Activated B cell treated with CpG ODN at 0.5 μM for 24 hours (primary cell): ENCODE measurements at regions of chr16 and their contacts with region 1.

Region 1: DNA sequence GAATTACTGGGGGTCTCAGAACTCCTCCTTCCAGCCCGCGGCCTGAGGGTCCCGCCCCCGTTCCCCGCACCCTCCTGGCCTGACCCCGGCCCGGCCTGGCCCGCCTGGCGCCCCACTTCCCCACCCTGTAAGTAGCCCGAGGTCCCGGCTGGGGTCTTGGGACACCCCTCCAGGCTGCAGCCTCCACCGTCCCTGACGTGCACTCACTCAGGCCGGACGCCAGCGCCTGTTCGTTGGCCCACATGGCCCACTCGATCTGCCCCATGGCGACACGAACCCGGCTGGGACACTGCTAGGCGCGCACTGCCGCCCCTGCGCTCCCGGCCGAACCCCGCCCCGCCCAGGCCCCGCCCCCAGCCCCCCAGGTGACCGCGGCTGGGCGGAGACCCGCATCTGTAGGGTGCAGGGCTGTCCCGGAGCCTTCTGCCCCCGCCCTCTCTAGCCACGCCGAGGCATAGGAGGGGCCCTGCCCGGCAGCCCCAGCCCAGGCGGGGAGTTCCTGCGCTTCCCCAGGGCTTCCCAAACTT is at the start of gene CYBA:
- DNase-seq: no peak
- ATAC-seq: peak; percentile 81
- H3K4me3 Mint-ChIP-seq: peak within 1 kb of the TSS; percentile 93
- H3K27ac Mint-ChIP-seq: peak within 1 kb of the TSS; percentile 93
- H3K4me1 Mint-ChIP-seq: peaks cover 50% of the 10 kb centered on the region
- H3K27me3 Mint-ChIP-seq: no peaks in the 10 kb centered on the region
- CTCF ChIP-seq: no peak
- total RNA-seq, gene CYBA: 432 and 456 TPM in 2 replicates

Region 2: DNA sequence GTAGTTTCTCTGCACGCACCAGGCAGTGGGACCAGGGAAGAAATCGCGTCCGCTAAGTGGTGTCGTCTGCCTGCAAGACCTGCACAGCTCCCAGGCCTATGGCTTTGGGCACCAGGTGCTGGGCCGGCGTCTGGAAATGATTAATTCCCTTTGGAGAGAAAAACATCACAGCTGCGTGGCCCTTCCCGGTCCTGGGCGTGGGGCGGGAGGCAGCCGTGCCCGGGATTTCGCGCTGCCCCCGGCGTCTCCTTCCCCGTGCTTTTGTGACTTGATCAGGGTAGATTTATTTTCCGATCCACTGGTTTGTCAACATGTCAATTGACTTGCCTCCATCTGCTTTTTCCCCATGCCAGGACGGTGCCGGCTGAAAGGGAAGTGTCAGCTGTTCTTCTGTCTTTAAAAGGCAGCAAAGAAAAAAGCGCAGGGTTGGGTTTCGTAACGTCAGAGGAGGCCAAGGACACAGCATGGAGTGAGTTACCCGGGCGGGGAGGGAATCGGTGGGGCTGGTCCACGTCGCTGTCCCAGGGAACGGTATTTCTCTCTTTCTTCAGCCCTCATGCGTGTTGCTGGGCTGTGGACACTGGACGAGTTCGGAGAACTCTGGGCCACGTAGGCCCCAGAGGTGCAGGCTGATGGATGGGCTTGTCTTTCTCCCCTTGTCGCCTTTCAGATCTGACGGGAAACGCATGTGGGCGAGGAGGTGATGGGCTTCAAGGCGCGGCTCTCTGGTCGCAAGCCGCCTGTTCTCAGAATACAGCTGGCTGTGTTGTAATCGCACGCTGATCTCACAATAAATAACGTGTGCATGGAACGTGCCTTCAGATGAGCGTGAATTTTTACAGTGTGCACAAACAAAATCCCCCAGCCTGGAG is 456.2 kb before region 1 on chr16:
- CTCF ChIA-PET with region 1: no interaction called
- POLR2A ChIA-PET with region 1: no interaction called
- intact Hi-C with region 1: no loop called
- DNase-seq: no peak
- ATAC-seq: no peak
- H3K4me3 Mint-ChIP-seq: no peak overlapping the region
- H3K27ac Mint-ChIP-seq: no peak overlapping the region
- H3K4me1 Mint-ChIP-seq: no peaks in the 10 kb centered on the region
- H3K27me3 Mint-ChIP-seq: no peaks in the 10 kb centered on the region
- CTCF ChIP-seq: no peak

Region 3: GRCh38 chr16:88452482-88453216 is 198.2 kb before region 1 on chr16:
- CTCF ChIA-PET with region 1: no interaction called
- POLR2A ChIA-PET with region 1: no interaction called
- intact Hi-C with region 1: loop called (anchors 1 kb)
- DNase-seq: peak; percentile 100
- ATAC-seq: peak; percentile 71
- H3K4me3 Mint-ChIP-seq: peak overlapping the region; percentile 87
- H3K27ac Mint-ChIP-seq: peak overlapping the region; percentile 80
- H3K4me1 Mint-ChIP-seq: peaks cover 57% of the 10 kb centered on the region
- H3K27me3 Mint-ChIP-seq: no peaks in the 10 kb centered on the region
- CTCF ChIP-seq: no peak

Region 4: GRCh38 chr16:88639231-88640038 is 11.4 kb before region 1 on chr16:
- CTCF ChIA-PET with region 1: interaction called, 3 read pairs
- POLR2A ChIA-PET with region 1: interaction called, 102 read pairs
- intact Hi-C with region 1: loop called (anchors 1 kb)
- DNase-seq: peak; percentile 40
- ATAC-seq: peak; percentile 25
- H3K4me3 Mint-ChIP-seq: no peak overlapping the region
- H3K27ac Mint-ChIP-seq: peak overlapping the region; percentile 54
- H3K4me1 Mint-ChIP-seq: peaks cover 80% of the 10 kb centered on the region
- H3K27me3 Mint-ChIP-seq: no peaks in the 10 kb centered on the region
- CTCF ChIP-seq: no peak

Region 5: GRCh38 chr16:88700636-88701482 is 50.0 kb after region 1 on chr16:
- CTCF ChIA-PET with region 1: no interaction called
- POLR2A ChIA-PET with region 1: interaction called, 49 read pairs
- intact Hi-C with region 1: loop called (anchors 1 kb)
- DNase-seq: peak; percentile 86
- ATAC-seq: peak; percentile 81
- H3K4me3 Mint-ChIP-seq: peak overlapping the region; percentile 81
- H3K27ac Mint-ChIP-seq: peak overlapping the region; percentile 90
- H3K4me1 Mint-ChIP-seq: peaks cover 73% of the 10 kb centered on the region
- H3K27me3 Mint-ChIP-seq: no peaks in the 10 kb centered on the region
- CTCF ChIP-seq: no peak

Region 6: GRCh38 chr16:88856828-88857733 is 206.3 kb after region 1 on chr16 and contains the starts of genes GALNS and TRAPPC2L:
- CTCF ChIA-PET with region 1: no interaction called
- POLR2A ChIA-PET with region 1: interaction called, 3 read pairs
- intact Hi-C with region 1: loop called (anchors 5 kb)
- DNase-seq: peak; percentile 99
- ATAC-seq: peak; percentile 88
- H3K4me3 Mint-ChIP-seq: peak within 1 kb of the TSS; percentile 92
- H3K27ac Mint-ChIP-seq: peak within 1 kb of the TSS; percentile 86
- H3K4me1 Mint-ChIP-seq: peaks cover 39% of the 10 kb centered on the region
- H3K27me3 Mint-ChIP-seq: no peaks in the 10 kb centered on the region
- CTCF ChIP-seq: no peak
- total RNA-seq, gene GALNS: 39.9 and 48.3 TPM in 2 replicates
- total RNA-seq, gene TRAPPC2L: 38.7 and 54.8 TPM in 2 replicates